PC-9 (cell line): ENCODE measurements at regions of chr7 and their contacts with region 1.

Region 1: GRCh38 chr7:22697876-22698606 is 29.0 kb upstream of the IL6 start:
- DNase-seq: peak; percentile 35 to 60
- H3K4me3 ChIP-seq: no peak overlapping the region
- H3K27ac ChIP-seq: no peak overlapping the region
- H3K4me1 ChIP-seq: peaks cover 15% of the 10 kb centered on the region; the same call in 1 of the 2 replicates
- H3K27me3 ChIP-seq: no peaks in the 10 kb centered on the region
- CTCF ChIP-seq: no peak

Region 2: GRCh38 chr7:21966271-21966670 is 731.8 kb before region 1 on chr7:
- CTCF ChIA-PET with region 1: no interaction called
- POLR2A ChIA-PET with region 1: no interaction called
- intact Hi-C with region 1: no loop called
- DNase-seq: peak in 1 of 2 experiments; percentile 15
- H3K4me3 ChIP-seq: no peak overlapping the region
- H3K27ac ChIP-seq: no peak overlapping the region
- H3K4me1 ChIP-seq: peaks cover under 1% of the 10 kb centered on the region
- H3K27me3 ChIP-seq: no peaks in the 10 kb centered on the region
- CTCF ChIP-seq: no peak

Region 3: DNA sequence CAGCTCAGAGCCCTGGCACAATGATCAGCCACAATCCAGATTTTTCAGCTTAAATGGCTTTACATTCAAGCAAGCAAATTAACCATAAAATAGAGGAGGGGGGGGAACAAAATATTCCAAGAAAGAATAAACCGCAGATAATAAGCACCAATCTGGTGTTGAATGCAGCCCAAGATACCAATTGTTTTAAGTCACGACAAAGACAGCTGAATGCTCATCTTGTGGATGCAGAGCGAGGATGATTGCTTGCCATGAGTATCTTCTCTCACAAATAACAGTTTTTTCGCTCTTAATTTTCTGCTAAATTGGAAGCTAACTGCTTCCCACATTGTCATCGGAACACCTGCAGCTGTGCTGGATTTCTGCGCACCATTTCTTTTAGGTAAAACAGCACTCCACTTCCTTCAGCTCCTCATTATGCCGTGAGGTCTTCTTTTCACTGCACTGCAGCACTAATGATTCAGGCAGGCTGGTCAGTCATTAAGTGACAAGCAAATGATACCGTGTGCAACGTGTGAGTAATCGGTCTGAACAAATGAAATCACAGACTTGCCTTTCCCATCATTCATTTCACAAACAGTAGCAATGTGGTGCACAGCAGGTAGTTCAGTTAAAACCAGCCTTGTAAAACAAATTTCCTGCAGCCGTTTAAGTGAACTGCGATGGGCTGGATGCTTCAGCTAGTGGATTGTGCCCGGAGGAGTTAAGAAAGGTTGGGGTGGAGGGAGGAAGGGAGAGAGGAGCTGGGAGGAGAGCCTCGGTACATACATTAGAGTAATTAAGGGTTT is 646.0 kb before region 1 on chr7:
- CTCF ChIA-PET with region 1: no interaction called
- POLR2A ChIA-PET with region 1: no interaction called
- intact Hi-C with region 1: no loop called
- DNase-seq: no peak
- H3K4me3 ChIP-seq: no peak overlapping the region
- H3K27ac ChIP-seq: no peak overlapping the region
- H3K4me1 ChIP-seq: no peaks in the 10 kb centered on the region
- H3K27me3 ChIP-seq: peaks cover 84% of the 10 kb centered on the region
- CTCF ChIP-seq: no peak

Region 4: DNA sequence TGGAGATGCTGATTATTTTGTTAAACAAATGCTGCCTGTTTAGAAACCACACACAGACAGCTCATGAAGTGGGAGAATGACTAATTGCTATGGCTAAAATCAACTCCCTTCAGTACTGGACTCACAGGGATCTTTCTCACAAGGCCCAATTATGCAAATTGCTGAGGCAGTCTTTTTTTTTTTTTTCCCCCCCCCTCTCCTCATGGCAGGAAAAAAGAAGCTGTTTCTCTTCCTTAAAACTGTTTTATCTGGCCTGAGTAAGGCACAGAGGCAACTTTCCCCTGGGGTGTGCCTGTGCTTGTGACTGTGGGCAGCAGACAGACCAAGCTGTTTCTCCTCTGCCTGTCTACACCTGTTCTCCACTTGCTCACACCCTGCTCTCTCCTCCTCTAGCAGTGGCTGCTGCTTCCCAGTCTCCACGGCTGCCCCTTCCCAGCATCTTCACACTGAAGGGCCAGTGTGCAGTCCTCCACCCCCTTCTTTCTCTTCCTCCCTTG is 132.7 kb before region 1 on chr7:
- CTCF ChIA-PET with region 1: interaction called, 9 read pairs
- POLR2A ChIA-PET with region 1: interaction called, 25 read pairs
- intact Hi-C with region 1: no loop called
- DNase-seq: peak in 1 of 2 experiments; percentile 89
- H3K4me3 ChIP-seq: peak overlapping the region; percentile 54; the same call in 1 of the 2 replicates
- H3K27ac ChIP-seq: peak overlapping the region; percentile 84
- H3K4me1 ChIP-seq: peaks cover 70% of the 10 kb centered on the region
- H3K27me3 ChIP-seq: no peaks in the 10 kb centered on the region
- CTCF ChIP-seq: no peak

Region 5: DNA sequence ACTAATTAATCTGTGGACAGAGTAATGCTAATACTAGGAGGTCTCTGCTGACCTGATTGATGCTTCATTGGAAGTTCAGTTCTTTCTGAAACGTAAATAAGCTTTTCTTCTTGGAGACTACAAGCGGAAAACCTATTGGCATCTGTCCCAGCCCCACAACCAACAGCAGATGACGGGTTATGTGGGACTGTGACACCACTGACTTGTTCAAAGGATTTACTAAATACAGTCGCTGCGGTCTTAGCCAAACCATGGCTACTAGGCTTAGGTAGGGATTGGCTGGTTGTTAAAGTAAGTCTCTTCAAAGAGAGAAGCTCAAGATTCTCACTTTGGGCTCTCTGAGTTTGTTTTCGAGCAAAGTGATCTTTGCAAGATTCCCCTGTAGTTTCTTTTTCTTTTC is 247.5 kb after region 1 on chr7:
- CTCF ChIA-PET with region 1: no interaction called
- POLR2A ChIA-PET with region 1: no interaction called
- intact Hi-C with region 1: no loop called
- DNase-seq: no peak
- H3K4me3 ChIP-seq: no peak overlapping the region
- H3K27ac ChIP-seq: no peak overlapping the region
- H3K4me1 ChIP-seq: no peaks in the 10 kb centered on the region
- H3K27me3 ChIP-seq: no peaks in the 10 kb centered on the region
- CTCF ChIP-seq: no peak

Region 6: GRCh38 chr7:23114896-23115295 is 416.9 kb after region 1 on chr7:
- CTCF ChIA-PET with region 1: no interaction called
- POLR2A ChIA-PET with region 1: interaction called, 13 read pairs
- intact Hi-C with region 1: no loop called
- DNase-seq: no peak
- H3K4me3 ChIP-seq: no peak overlapping the region
- H3K27ac ChIP-seq: no peak overlapping the region
- H3K4me1 ChIP-seq: no peaks in the 10 kb centered on the region
- H3K27me3 ChIP-seq: no peaks in the 10 kb centered on the region
- CTCF ChIP-seq: no peak

Region 7: DNA sequence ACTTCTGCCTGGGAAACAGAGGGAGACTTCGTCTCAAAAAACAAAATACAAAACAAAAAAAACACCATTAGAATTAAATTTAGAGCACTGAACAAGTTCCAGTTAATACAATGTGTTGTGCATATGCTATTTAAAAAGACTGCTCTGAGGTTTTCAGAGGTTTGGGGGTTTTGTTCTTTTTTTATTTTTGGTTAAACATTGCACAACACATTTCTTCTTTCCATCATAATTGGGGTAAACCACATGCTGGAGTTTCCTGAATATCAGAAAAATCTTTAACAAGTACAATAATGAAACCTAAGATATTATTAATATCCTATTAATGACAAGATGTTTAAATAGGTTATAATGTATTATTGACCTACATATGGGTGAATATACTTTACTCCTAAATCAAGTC is 745.9 kb after region 1 on chr7:
- CTCF ChIA-PET with region 1: interaction called, 15 read pairs
- POLR2A ChIA-PET with region 1: no interaction called
- intact Hi-C with region 1: no loop called
- DNase-seq: no peak
- H3K4me3 ChIP-seq: no peak overlapping the region
- H3K27ac ChIP-seq: 0 out of 2 replicates have a peak overlapping the region, but pooled peaks have one; percentile 1
- H3K4me1 ChIP-seq: no peaks in the 10 kb centered on the region
- H3K27me3 ChIP-seq: no peaks in the 10 kb centered on the region
- CTCF ChIP-seq: no peak